ENCODE measurements at regions of chr10 and their contacts with region 1.

Region 1: GRCh38 chr10:98353170-98353569 is 61.8 kb downstream of the PYROXD2 start:
- DNase-seq: no peak
- H3K4me3 ChIP-seq: no peak overlapping the region
- H3K27ac ChIP-seq: no peak overlapping the region
- H3K4me1 ChIP-seq: no peaks in the 10 kb centered on the region
- H3K27me3 ChIP-seq: no peaks in the 10 kb centered on the region
- CTCF ChIP-seq: no peak

Region 2: GRCh38 chr10:98006266-98006665 is 346.9 kb before region 1 on chr10:
- CTCF ChIA-PET with region 1: no interaction called
- POLR2A ChIA-PET with region 1: no interaction called
- intact Hi-C with region 1: no loop called
- DNase-seq: no peak
- H3K4me3 ChIP-seq: no peak overlapping the region
- H3K27ac ChIP-seq: no peak overlapping the region
- H3K4me1 ChIP-seq: no peaks in the 10 kb centered on the region
- H3K27me3 ChIP-seq: peaks cover 47% of the 10 kb centered on the region
- CTCF ChIP-seq: no peak

Region 3: DNA sequence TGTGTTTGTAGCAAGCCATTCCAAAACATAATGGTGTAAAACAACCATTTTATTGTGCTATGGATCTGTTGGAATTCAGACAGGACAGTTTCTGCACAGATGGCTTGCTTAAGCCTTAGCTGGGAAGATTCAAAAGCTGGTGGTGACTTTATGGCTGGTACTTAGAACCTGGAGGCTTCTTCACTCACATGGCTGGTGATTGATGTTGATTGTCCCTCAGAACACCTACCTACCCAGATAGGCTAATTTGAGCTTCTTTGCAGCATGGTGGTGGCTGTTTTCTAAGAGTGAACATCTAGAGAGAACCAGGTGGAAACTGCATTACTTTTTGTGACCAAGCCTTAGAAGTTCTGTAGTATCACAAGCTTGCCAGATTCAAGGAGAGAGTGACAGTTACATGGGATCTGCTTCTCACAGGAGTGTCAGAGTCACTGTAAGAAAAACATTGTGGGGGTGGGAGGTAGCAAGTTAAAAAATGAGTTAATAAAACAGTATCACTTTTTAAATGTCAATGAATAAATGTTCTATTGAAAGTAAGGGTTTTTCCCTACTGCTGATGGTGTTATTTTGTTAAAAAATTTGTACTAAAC is 211.6 kb before region 1 on chr10:
- CTCF ChIA-PET with region 1: no interaction called
- POLR2A ChIA-PET with region 1: interaction called, 10 read pairs
- intact Hi-C with region 1: no loop called
- DNase-seq: no peak
- H3K4me3 ChIP-seq: no peak overlapping the region
- H3K27ac ChIP-seq: no peak overlapping the region
- H3K4me1 ChIP-seq: no peaks in the 10 kb centered on the region
- H3K27me3 ChIP-seq: no peaks in the 10 kb centered on the region
- CTCF ChIP-seq: no peak